Posterior vena cava (tissue), 2 donors: ENCODE measurements at regions of chr1 and their contacts with region 1.

Region 1: GRCh38 chr1:11458811-11459275 is 20.1 kb upstream of the DISP3 start:
- DNase-seq: no peak

Region 2: DNA sequence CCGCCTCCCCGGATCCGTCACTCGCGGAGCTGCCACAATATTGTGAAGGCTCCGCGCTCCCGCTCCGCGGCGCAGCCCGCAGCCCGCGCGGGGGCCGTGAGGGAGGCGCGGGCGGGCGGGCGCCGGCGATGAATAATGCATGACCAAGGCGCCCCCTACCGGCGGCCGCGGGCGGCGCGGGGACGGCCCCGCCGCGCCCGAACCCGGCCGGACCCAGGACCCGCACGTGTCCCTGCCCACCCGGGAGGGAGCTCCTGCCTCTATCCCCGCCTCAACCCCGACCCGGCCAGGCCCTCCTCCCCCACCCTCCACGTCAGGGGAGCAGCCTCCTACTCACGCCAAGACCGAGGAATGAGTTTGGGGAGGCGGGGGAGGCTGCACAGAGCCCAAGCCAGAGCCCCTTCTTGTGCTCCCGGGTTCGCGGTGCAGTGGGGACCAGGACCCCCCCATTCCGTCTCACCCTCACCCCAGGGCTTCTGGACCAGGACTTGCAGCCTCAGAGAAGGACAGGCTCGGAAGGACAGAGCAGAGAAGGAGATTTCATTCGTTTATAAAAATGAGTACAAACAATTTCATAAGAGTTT is 591.6 kb before region 1 on chr1:
- intact Hi-C with region 1: no loop called
- DNase-seq: no peak

Region 3: GRCh38 chr1:11316701-11317100 is 142.1 kb before region 1 on chr1:
- intact Hi-C with region 1: no loop called
- DNase-seq: no peak

Region 4: DNA sequence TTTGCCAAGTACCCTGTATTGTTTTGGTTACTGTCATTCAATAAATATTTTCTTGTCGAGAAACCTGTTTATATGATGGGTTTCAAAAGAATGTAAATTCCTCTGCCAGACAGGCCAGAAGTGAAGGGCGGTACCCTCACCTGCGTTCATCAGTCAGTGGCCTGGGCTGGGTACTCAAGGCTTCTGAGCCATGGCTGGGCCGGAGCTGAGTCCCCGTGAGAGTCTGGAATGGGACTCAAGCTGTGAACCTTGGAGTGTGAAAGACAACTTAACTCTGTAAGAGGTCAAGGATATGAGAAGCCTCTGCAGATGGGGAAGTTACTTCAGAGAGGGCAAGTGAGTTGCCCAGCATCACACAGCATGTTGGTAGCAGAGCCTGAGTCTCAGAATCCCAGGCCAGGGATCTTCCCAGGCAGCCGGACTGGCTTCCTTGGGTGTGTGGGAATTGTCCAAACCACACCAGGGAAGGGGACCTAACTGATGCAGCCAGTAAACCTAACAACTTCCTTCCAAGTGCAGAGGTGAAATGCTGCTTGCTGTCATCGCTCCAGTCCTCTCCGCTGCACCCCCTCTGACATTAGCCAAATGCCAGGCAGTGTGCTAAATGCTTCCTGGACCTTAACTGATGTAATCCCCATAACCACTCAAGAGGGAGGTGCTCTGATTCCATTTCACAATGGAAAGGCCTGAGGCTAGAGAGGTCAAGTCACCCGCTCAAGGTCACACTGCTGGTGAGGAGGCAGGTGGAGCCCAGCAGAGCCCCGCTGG is 24.9 kb after region 1 on chr1:
- intact Hi-C with region 1: loop called in 1 of 2 experiments (anchors 1 kb)
- DNase-seq: peak; percentile 66

Region 5: DNA sequence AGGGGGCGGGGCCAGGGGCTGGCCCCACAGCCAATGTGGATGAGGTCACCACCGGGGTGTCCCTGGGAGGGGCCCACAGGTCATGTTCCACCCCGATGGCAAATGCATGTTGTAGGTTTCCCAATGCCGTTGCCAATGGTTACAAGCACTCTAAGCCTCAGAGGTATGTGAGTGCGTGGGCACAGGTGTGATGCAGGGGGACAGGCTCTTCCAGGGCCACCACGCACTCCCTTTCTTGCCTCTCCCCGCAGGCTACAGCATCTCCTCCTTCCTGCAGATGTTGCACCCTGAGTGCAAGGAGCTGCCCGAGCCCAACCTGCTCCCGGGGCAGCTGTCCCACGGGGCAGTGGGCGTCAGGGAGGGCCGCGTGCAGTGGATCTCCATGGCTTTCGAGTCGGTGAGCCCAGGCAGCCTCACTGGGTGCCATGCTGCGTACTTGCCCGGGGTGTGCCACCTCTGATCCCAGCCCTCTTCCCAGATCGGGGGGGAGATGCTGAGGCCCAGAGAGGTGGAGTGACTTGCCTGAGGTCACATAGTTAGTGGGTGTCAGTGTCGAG is 72.5 kb after region 1 on chr1:
- intact Hi-C with region 1: no loop called
- DNase-seq: no peak